ENCODE measurements at regions of chr7 and their contacts with region 1.

Region 1: GRCh38 chr7:73329861-73330581 is 2.1 kb downstream of the FKBP6 start:
- DNase-seq: no peak
- H3K4me3 ChIP-seq: no peak overlapping the region
- H3K27ac ChIP-seq: no peak overlapping the region
- H3K4me1 ChIP-seq: no peaks in the 10 kb centered on the region
- H3K27me3 ChIP-seq: no peaks in the 10 kb centered on the region
- CTCF ChIP-seq: no peak

Region 2: GRCh38 chr7:73397521-73398281 is 67.7 kb after region 1 on chr7:
- CTCF ChIA-PET with region 1: no interaction called
- dilution Hi-C with region 1: no loop called
- in situ Hi-C with region 1: no loop called
- intact Hi-C with region 1: loop called (anchors 10 kb)
- DNase-seq: no peak
- H3K4me3 ChIP-seq: no peak overlapping the region
- H3K27ac ChIP-seq: no peak overlapping the region
- H3K4me1 ChIP-seq: no peaks in the 10 kb centered on the region
- H3K27me3 ChIP-seq: no peaks in the 10 kb centered on the region
- CTCF ChIP-seq: no peak

Region 3: GRCh38 chr7:73436031-73436828 is 106.2 kb after region 1 on chr7:
- CTCF ChIA-PET with region 1: no interaction called
- dilution Hi-C with region 1: no loop called
- in situ Hi-C with region 1: no loop called
- intact Hi-C with region 1: no loop called
- DNase-seq: no peak
- H3K4me3 ChIP-seq: no peak overlapping the region
- H3K27ac ChIP-seq: no peak overlapping the region
- H3K4me1 ChIP-seq: no peaks in the 10 kb centered on the region
- H3K27me3 ChIP-seq: no peaks in the 10 kb centered on the region
- CTCF ChIP-seq: no peak

Region 4: DNA sequence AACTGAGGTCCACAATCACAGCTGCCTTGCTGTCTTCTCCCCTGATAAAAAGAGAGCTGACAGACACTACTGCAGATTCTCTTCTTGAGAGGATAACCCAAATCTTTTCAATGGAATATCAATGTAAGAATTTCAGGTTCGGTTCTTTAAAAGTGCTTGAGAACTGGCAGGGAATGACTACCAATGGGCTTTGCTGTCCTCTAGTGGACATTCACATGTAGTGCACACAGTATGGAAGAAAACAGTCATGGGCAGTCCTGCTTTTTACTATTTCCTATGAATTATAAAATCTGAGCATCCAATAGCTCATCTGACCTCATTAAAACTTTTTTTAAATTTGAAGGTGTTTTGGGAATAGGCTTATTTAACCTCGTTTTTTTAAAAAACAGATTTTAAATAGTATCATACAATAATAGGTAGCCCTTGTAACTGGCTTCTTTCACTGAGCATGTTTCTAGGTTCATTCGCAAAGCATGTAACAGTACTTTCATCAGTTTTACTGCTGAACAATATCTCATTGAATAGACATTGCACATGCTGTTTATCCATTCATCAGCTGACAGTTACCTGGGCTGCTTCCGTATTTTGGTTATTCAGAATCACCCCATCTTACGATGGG is 121.9 kb after region 1 on chr7:
- CTCF ChIA-PET with region 1: no interaction called
- dilution Hi-C with region 1: no loop called
- in situ Hi-C with region 1: loop called in 1 of 2 experiments (anchors 10 kb)
- intact Hi-C with region 1: no loop called
- DNase-seq: peak; percentile 24
- H3K4me3 ChIP-seq: no peak overlapping the region
- H3K27ac ChIP-seq: no peak overlapping the region
- H3K4me1 ChIP-seq: no peaks in the 10 kb centered on the region
- H3K27me3 ChIP-seq: no peaks in the 10 kb centered on the region
- CTCF ChIP-seq: peak; percentile 97 to 100

Measured in mammary epithelial cell (primary cell).